Sigmoid colon (tissue), 7 donors: ENCODE measurements at regions of chr12 and their contacts with region 1.

Region 1: GRCh38 chr12:57213058-57213715 is 3.4 kb upstream of the NXPH4 start:
- DNase-seq: peak; percentile 93
- H3K4me3 ChIP-seq: no peak overlapping the region
- H3K27ac ChIP-seq: no peak overlapping the region
- H3K4me1 ChIP-seq: peaks cover 0 to 32% (median 28%) of the 10 kb centered on the region in 4 donors
- H3K27me3 ChIP-seq: peaks cover 34 to 46% (median 35%) of the 10 kb centered on the region in 3 donors
- CTCF ChIP-seq: peak; percentile 73 to 89 (median 78)
- EP300 ChIP-seq: no peak
- POLR2A ChIP-seq: no peak

Region 2: DNA sequence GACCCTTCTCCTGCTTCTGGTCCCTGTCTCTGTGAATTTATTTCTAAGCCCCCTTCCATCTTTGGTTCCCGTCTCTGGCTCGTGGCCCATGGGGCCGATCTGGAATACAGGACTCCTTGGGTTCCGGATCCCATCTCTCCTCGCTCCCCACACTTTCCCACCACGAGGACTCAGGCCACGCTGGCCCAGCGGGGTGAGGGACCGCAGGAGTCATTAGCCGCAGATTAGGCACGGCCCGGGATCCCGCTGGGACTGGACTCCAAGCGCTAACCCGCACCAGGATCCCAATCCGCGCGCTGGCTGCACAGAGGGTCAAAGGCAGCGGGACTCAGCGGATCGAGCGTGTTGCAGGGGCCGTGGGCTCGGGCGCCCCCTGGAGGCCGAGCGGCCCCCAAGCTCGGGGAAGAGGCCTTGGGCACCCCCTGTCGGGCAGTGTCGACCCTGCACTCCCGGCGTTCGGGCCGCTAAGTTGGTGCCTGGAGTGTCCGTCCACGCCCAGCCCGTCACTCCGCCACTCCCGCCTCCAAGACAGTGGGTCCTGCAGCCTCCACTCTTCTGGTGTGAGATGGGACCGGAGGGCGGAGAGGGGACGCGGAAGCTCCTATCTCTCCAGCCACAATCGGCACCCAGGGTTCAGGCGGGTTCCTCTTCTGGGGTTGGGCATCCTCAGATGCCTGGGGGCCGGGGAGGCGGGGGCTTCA is 25.8 kb after region 1 on chr12:
- intact Hi-C with region 1: loop called (anchors 1 kb)
- DNase-seq: peak; percentile 93
- H3K4me3 ChIP-seq: peak overlapping the region; percentile 26 to 50 (median 44)
- H3K27ac ChIP-seq: peak overlapping the region in 1 of 4 donors; percentile 38
- H3K4me1 ChIP-seq: peaks cover 0 to 66% (median 58%) of the 10 kb centered on the region in 4 donors
- H3K27me3 ChIP-seq: peaks cover 60 to 88% (median 84%) of the 10 kb centered on the region in 3 donors
- CTCF ChIP-seq: peak; percentile 100
- EP300 ChIP-seq: no peak
- POLR2A ChIP-seq: no peak